ENCODE measurements at regions of chr9 and their contacts with region 1.

Region 1: GRCh38 chr9:107685901-107686300 is 196.3 kb upstream of the KLF4 start:
- DNase-seq: no peak
- ATAC-seq: no peak
- H3K4me3 ChIP-seq: no peak overlapping the region
- H3K27ac ChIP-seq: no peak overlapping the region
- H3K4me1 ChIP-seq: no peaks in the 10 kb centered on the region
- H3K27me3 ChIP-seq: no peaks in the 10 kb centered on the region

Region 2: GRCh38 chr9:107650321-107650720 is 35.6 kb before region 1 on chr9:
- intact Hi-C with region 1: no loop called
- DNase-seq: no peak
- ATAC-seq: no peak
- H3K4me3 ChIP-seq: no peak overlapping the region
- H3K27ac ChIP-seq: no peak overlapping the region
- H3K4me1 ChIP-seq: no peaks in the 10 kb centered on the region
- H3K27me3 ChIP-seq: no peaks in the 10 kb centered on the region

Region 3: DNA sequence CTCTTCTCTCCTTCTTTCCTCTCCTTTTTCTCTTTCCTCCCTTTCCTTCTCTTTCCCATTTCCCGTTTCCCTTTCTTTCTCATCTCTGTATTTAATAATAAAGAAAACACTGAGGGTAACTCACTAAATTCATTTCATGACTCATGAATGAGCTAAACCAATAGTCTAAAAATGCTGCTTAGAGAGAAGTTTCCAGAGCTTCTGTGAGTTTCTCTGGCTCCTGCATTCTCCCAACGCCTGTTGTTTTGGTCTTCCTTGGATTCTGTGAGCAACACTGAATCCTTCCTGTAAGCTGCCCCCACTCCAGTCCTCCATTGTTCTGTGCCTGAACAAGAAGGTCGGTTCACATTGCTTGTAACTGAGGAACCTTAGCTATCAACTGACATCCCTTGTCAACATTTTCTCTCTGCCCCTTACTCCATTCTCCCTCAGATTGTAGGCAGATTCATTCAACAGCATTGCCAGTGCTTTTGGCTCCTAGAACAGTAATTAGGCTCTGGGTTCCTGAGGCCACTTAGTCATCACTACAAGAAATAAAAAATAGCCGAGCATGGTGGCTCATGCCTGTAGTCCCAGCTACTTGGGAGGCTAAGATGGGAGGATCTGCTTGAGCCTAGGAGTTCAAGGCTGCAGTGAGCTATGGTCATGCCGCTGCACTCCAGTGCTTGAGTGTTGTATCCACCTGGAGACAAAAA is 41.3 kb after region 1 on chr9:
- intact Hi-C with region 1: loop called in 1 of 2 experiments (anchors 5 kb)
- DNase-seq: no peak
- ATAC-seq: no peak
- H3K4me3 ChIP-seq: no peak overlapping the region
- H3K27ac ChIP-seq: peak overlapping the region; percentile 73 to 90
- H3K4me1 ChIP-seq: peaks cover 2 to 9% of the 10 kb centered on the region in 2 donors
- H3K27me3 ChIP-seq: no peaks in the 10 kb centered on the region

Region 4: GRCh38 chr9:107809871-107810460 is 124.1 kb after region 1 on chr9:
- intact Hi-C with region 1: no loop called
- DNase-seq: no peak
- ATAC-seq: no peak
- H3K4me3 ChIP-seq: no peak overlapping the region
- H3K27ac ChIP-seq: no peak overlapping the region
- H3K4me1 ChIP-seq: no peaks in the 10 kb centered on the region
- H3K27me3 ChIP-seq: no peaks in the 10 kb centered on the region